ENCODE measurements at regions of chr19 and their contacts with region 1.

Region 1: DNA sequence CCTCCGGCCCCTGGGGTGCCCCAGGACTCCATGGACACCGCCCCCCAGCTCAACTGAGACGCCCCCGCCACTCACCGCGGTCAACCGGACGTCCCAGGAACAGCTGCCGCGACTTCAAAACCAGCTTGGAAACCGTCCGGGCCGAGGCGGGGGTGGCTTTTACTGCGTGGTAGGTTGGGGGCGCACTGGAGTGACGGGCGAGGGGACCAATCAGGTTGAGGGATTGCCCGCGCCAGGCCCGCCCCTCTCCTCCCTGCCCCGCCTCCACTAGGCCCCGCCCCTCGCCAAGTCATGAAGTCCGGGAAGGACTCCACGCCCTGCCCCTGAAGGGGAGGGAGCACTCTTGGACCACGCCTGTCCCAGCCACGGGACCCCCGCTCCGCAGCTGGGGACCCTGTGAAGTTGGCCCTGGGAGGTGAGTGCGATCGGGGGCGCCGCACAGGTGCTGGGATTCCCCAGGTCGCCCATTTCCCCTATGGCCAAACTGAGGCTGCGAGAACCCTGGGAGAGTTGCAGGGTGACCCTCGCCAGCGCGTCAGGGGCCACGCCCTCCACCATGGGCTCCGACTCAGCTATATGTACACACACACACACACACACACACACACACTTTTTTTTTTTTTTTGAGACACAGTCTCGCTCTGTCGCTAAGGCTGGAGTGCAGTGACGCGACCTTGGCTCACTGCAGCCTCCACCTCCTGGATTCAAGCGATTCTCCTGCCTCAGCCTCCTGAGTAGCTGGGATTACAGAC is at the start of gene PLIN3:
- DNase-seq: peak; percentile 95
- H3K4me3 Mint-ChIP-seq: peak within 1 kb of the TSS; percentile 74
- H3K27ac Mint-ChIP-seq: peak within 1 kb of the TSS; percentile 70
- H3K4me1 Mint-ChIP-seq: peaks cover 30% of the 10 kb centered on the region
- H3K27me3 Mint-ChIP-seq: peaks cover 25% of the 10 kb centered on the region

Region 2: GRCh38 chr19:4909897-4910593 is 42.3 kb after region 1 on chr19:
- CTCF ChIA-PET with region 1: interaction called, 80 read pairs
- DNase-seq: peak; percentile 97
- H3K4me3 Mint-ChIP-seq: peak overlapping the region; percentile 85
- H3K27ac Mint-ChIP-seq: peak overlapping the region; percentile 98
- H3K4me1 Mint-ChIP-seq: peaks cover 52% of the 10 kb centered on the region
- H3K27me3 Mint-ChIP-seq: peaks cover 5% of the 10 kb centered on the region

Measured in activated naive CD4-positive, alpha-beta T cell treated with anti-CD3 and anti-CD28 coated beads, Interleukin-2, amount 10 ng/mL, durations not matched to agents 7 days and 5 days (primary cell).